WTC11 (cell line): ENCODE measurements at regions of chr7 and their contacts with region 1.

Region 1: DNA sequence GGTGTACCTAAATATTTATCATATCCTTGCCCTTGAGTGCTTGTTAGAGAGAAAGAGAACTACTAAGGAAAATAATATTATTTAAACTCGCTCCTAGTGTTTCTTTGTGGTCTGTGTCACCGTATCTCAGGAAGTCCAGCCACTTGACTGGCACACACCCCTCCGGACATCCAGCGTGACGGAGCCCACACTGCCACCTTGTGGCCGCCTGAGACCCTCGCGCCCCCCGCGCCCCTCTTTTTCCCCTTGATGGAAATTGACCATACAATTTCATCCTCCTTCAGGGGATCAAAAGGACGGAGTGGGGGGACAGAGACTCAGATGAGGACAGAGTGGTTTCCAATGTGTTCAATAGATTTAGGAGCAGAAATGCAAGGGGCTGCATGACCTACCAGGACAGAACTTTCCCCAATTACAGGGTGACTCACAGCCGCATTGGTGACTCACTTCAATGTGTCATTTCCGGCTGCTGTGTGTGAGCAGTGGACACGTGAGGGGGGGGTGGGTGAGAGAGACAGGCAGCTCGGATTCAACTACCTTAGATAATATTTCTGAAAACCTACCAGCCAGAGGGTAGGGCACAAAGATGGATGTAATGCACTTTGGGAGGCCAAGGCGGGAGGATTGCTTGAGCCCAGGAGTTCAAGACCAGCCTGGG is 11.4 kb downstream of the SERPINE1 start:
- DNase-seq: peak; percentile 62
- ATAC-seq: peak; percentile 73
- H3K4me3 Mint-ChIP-seq: peak overlapping the region; percentile 46
- H3K27ac Mint-ChIP-seq: no peak overlapping the region
- H3K4me1 Mint-ChIP-seq: peaks cover 52% of the 10 kb centered on the region
- H3K27me3 Mint-ChIP-seq: peaks cover 3% of the 10 kb centered on the region; the same call in 1 of the 2 replicates
- CTCF ChIP-seq: peak; percentile 59

Region 2: GRCh38 chr7:100933735-100934134 is 204.6 kb before region 1 on chr7:
- CTCF ChIA-PET with region 1: no interaction called
- POLR2A ChIA-PET with region 1: no interaction called
- DNase-seq: peak; percentile 54
- ATAC-seq: peak; percentile 85
- H3K4me3 Mint-ChIP-seq: no peak overlapping the region
- H3K27ac Mint-ChIP-seq: no peak overlapping the region
- H3K4me1 Mint-ChIP-seq: peaks cover 22% of the 10 kb centered on the region
- H3K27me3 Mint-ChIP-seq: no peaks in the 10 kb centered on the region; the same call in none of the 2 replicates
- CTCF ChIP-seq: no peak

Region 3: DNA sequence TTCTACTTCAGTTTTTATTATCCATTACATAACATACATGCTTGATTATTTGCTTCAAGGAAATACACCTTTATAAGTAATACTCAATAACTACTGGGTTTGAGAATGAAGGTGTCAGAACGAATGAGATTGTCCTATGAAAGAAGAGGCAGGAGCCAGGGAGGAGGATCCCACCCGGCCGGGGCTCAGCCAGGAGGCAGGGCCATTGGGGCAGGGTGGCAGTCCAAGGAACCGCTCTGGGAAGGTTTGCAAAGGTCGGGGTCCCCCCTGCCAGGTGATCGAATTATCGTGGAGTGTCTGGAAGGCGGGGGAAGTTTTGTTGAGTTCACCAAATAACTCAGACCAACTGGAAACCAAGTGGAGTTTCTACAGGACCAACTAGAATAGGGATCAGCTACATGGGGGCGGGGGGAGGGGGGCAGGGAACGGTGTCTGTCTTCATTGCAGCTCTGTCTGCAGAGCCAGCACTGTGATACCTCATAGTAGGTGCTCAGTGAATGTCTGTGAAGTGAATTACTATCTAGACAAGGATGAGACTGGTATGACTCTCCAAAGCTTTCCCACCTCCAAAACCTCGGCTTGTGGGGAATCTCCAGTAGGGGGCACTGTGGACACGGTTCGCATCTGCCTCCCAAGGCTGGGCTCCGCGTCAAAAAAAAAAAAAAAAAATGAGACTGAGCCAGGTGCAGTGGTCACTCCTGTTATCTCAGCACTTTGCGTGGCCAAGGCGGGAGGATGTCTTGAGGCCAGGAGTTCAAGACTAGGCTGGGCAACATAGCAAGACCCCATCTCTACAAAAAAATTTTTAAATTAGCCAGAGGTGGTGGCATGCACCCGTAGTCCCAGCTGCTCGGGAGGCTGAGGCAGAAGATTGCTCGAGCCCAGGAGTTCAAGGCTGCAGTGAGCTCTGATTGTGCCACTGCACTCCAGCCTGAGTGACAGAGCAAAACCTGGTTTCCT is 43.6 kb before region 1 on chr7:
- CTCF ChIA-PET with region 1: interaction called, 15 read pairs
- POLR2A ChIA-PET with region 1: no interaction called
- DNase-seq: peak; percentile 78
- ATAC-seq: peak; percentile 89
- H3K4me3 Mint-ChIP-seq: no peak overlapping the region
- H3K27ac Mint-ChIP-seq: no peak overlapping the region
- H3K4me1 Mint-ChIP-seq: peaks cover 14% of the 10 kb centered on the region
- H3K27me3 Mint-ChIP-seq: no peaks in the 10 kb centered on the region
- CTCF ChIP-seq: peak; percentile 73

Region 4: DNA sequence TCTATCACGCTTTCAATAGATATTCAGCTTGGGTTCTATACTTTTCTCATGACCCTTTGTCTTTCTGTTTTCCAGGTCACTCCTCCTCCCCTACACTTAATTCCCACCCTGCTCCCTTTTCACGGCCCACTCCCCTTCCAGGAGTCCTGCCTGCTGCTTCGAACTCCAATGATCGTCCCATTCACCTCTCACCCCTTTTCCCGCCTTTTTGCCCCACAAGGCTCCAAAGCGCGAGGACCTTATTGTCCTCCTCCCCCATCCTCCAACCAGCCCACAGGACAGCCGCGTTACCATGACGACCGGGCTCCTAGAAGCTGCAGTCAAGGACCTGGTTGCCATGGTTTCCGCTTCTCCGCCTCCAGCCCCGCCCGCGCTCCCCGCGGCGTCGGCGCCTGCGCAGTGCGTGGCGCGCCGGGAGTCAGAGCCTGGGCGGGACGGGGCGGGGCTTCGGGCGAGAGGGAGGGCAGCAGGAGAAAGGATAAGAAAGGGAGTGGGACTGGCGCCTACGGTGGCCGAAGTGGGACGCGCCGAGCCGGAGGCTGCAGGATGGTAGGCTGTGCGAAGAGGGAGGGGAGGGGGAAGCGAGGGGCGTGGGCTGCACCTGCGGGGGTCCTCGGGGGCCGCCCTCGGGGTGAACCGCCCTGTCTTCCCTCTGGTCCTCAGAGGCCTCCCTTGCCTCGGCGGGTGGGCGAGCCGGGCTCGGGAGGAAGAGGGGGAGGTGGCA is 15.8 kb after region 1 on chr7 and contains the start of gene AP1S1:
- CTCF ChIA-PET with region 1: interaction called, 109 read pairs
- POLR2A ChIA-PET with region 1: no interaction called
- DNase-seq: peak; percentile 98
- ATAC-seq: peak; percentile 91
- H3K4me3 Mint-ChIP-seq: peak within 1 kb of the TSS; percentile 80
- H3K27ac Mint-ChIP-seq: peak within 1 kb of the TSS; percentile 37; the same call in 1 of the 2 replicates
- H3K4me1 Mint-ChIP-seq: peaks cover 28% of the 10 kb centered on the region
- H3K27me3 Mint-ChIP-seq: peaks cover 18% of the 10 kb centered on the region
- CTCF ChIP-seq: no peak
- total RNA-seq, gene AP1S1: 60.7 to 80.0 TPM (median 78.2 TPM) in 3 replicates

Region 5: GRCh38 chr7:101173752-101174244 is 35.5 kb after region 1 on chr7:
- CTCF ChIA-PET with region 1: interaction called, 78 read pairs
- POLR2A ChIA-PET with region 1: no interaction called
- DNase-seq: peak; percentile 91
- ATAC-seq: peak; percentile 71
- H3K4me3 Mint-ChIP-seq: peak overlapping the region; percentile 74
- H3K27ac Mint-ChIP-seq: no peak overlapping the region
- H3K4me1 Mint-ChIP-seq: peaks cover 43% of the 10 kb centered on the region
- H3K27me3 Mint-ChIP-seq: peaks cover 100% of the 10 kb centered on the region
- CTCF ChIP-seq: no peak

Region 6: GRCh38 chr7:101201695-101202604 is 63.6 kb after region 1 on chr7:
- CTCF ChIA-PET with region 1: interaction called, 217 read pairs
- POLR2A ChIA-PET with region 1: no interaction called
- DNase-seq: peak; percentile 56
- ATAC-seq: peak; percentile 62
- H3K4me3 Mint-ChIP-seq: peak overlapping the region; percentile 72
- H3K27ac Mint-ChIP-seq: no peak overlapping the region
- H3K4me1 Mint-ChIP-seq: peaks cover 28% of the 10 kb centered on the region
- H3K27me3 Mint-ChIP-seq: peaks cover 16% of the 10 kb centered on the region
- CTCF ChIP-seq: no peak

Region 7: GRCh38 chr7:101244375-101245146 is 106.2 kb after region 1 on chr7 and contains the start of gene FIS1:
- CTCF ChIA-PET with region 1: interaction called, 30 read pairs
- POLR2A ChIA-PET with region 1: no interaction called
- DNase-seq: peak; percentile 95
- ATAC-seq: peak; percentile 93
- H3K4me3 Mint-ChIP-seq: peak within 1 kb of the TSS; percentile 96
- H3K27ac Mint-ChIP-seq: peak within 1 kb of the TSS; percentile 98
- H3K4me1 Mint-ChIP-seq: peaks cover 21% of the 10 kb centered on the region
- H3K27me3 Mint-ChIP-seq: no peaks in the 10 kb centered on the region
- CTCF ChIP-seq: peak; percentile 47
- total RNA-seq, gene FIS1: 121 to 123 TPM (median 122 TPM) in 3 replicates

Region 8: GRCh38 chr7:101294039-101294831 is 155.9 kb after region 1 on chr7:
- CTCF ChIA-PET with region 1: interaction called, 28 read pairs
- POLR2A ChIA-PET with region 1: no interaction called
- DNase-seq: peak; percentile 85
- ATAC-seq: peak; percentile 64
- H3K4me3 Mint-ChIP-seq: peak overlapping the region; percentile 36
- H3K27ac Mint-ChIP-seq: peak overlapping the region; percentile 99
- H3K4me1 Mint-ChIP-seq: peaks cover 65% of the 10 kb centered on the region
- H3K27me3 Mint-ChIP-seq: no peaks in the 10 kb centered on the region
- CTCF ChIP-seq: no peak

Region 9: GRCh38 chr7:101333912-101334311 is 195.6 kb after region 1 on chr7:
- CTCF ChIA-PET with region 1: no interaction called
- POLR2A ChIA-PET with region 1: no interaction called
- DNase-seq: no peak
- ATAC-seq: no peak
- H3K4me3 Mint-ChIP-seq: no peak overlapping the region
- H3K27ac Mint-ChIP-seq: no peak overlapping the region; the same call in 1 of the 2 replicates
- H3K4me1 Mint-ChIP-seq: no peaks in the 10 kb centered on the region
- H3K27me3 Mint-ChIP-seq: peaks cover 3% of the 10 kb centered on the region; the same call in 1 of the 2 replicates
- CTCF ChIP-seq: no peak